Activated naive CD4-positive, alpha-beta T cell treated with anti-CD3 and anti-CD28 coated beads for 36 hours (primary cell): ENCODE measurements at regions of chr9 and their contacts with region 1.

Region 1: DNA sequence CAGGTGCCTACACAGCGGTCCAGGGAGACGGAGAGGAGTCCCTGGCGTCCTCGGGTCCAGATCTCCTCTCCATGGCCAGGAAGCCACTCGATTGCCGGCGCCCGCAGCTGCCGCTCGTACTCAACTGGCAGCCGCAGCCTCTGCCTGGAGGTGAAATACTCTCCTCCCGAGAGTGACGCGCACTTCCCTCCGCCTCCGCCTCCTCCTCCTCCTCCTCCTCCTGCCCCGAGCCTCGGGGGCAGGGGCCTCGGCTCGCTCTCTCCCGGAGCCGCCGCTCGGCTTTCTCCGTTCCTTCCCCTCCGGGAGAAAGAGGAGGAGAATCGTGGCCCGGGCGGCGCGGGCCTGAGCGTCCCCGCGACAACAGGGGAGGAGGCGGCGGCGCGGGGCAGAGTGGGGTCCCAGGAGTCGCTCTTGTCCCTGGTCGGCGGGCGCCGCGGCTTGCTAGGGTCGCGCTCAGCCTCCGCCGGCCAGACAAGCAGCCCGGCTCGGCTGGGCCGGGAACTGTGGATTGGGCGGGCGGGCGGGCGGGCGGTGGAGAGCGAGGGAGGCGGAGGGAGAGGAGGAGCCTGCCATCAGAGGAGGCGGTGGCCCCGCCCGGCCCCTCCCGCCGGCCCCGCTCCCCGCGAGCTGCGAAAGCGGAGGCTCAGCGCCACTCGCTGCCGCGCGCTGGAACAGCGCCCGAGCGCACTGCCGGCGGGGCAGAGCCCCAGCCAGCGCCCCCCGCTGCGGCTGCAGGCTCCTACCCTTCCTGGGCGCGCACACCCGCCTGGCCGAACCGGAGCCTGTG is at the start of gene CEMIP2:
- DNase-seq: peak; percentile 88
- H3K4me3 Mint-ChIP-seq: peak within 1 kb of the TSS; percentile 86
- H3K27ac Mint-ChIP-seq: peak within 1 kb of the TSS; percentile 91
- H3K4me1 Mint-ChIP-seq: peaks cover 37% of the 10 kb centered on the region
- H3K27me3 Mint-ChIP-seq: no peaks in the 10 kb centered on the region
- total RNA-seq, gene CEMIP2: 36.4 to 39.7 TPM

Region 2: GRCh38 chr9:70639853-70640814 is 1128.4 kb before region 1 on chr9:
- CTCF ChIA-PET with region 1: no interaction called
- intact Hi-C with region 1: loop called (anchors 1 kb)
- DNase-seq: peak; percentile 9
- H3K4me3 Mint-ChIP-seq: no peak overlapping the region
- H3K27ac Mint-ChIP-seq: no peak overlapping the region
- H3K4me1 Mint-ChIP-seq: no peaks in the 10 kb centered on the region
- H3K27me3 Mint-ChIP-seq: peaks cover 10% of the 10 kb centered on the region

Region 3: GRCh38 chr9:71446473-71447411 is 321.8 kb before region 1 on chr9:
- CTCF ChIA-PET with region 1: no interaction called
- intact Hi-C with region 1: loop called (anchors 1 kb)
- DNase-seq: peak; percentile 78
- H3K4me3 Mint-ChIP-seq: peak overlapping the region; percentile 55
- H3K27ac Mint-ChIP-seq: no peak overlapping the region
- H3K4me1 Mint-ChIP-seq: peaks cover 3% of the 10 kb centered on the region
- H3K27me3 Mint-ChIP-seq: peaks cover 37% of the 10 kb centered on the region

Region 4: GRCh38 chr9:71683598-71684235 is 84.9 kb before region 1 on chr9:
- CTCF ChIA-PET with region 1: no interaction called
- intact Hi-C with region 1: loop called (anchors 2 kb)
- DNase-seq: no peak
- H3K4me3 Mint-ChIP-seq: no peak overlapping the region
- H3K27ac Mint-ChIP-seq: no peak overlapping the region
- H3K4me1 Mint-ChIP-seq: peaks cover 27% of the 10 kb centered on the region
- H3K27me3 Mint-ChIP-seq: no peaks in the 10 kb centered on the region

Region 5: DNA sequence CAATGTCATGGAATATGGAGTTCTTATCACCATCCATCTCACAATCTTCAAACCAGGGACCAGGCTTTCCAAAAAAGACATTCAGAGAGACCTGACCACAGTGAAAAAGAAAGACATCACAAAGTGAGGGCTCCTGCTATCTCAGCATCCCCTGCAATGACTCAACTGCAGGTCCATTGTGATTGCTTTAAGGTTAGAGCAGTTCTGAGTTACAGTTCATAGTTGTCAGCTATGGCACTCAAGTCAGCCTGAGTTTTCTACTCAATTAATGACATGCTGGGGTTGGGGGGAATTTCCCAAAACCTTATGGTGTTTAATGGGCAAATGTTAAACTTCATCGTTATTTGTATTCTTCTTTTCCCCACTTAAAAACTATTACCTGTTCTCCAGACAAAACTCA is 59.2 kb before region 1 on chr9:
- CTCF ChIA-PET with region 1: no interaction called
- intact Hi-C with region 1: no loop called
- DNase-seq: peak; percentile 11
- H3K4me3 Mint-ChIP-seq: no peak overlapping the region
- H3K27ac Mint-ChIP-seq: peak overlapping the region; percentile 11
- H3K4me1 Mint-ChIP-seq: peaks cover 25% of the 10 kb centered on the region
- H3K27me3 Mint-ChIP-seq: no peaks in the 10 kb centered on the region

Region 6: DNA sequence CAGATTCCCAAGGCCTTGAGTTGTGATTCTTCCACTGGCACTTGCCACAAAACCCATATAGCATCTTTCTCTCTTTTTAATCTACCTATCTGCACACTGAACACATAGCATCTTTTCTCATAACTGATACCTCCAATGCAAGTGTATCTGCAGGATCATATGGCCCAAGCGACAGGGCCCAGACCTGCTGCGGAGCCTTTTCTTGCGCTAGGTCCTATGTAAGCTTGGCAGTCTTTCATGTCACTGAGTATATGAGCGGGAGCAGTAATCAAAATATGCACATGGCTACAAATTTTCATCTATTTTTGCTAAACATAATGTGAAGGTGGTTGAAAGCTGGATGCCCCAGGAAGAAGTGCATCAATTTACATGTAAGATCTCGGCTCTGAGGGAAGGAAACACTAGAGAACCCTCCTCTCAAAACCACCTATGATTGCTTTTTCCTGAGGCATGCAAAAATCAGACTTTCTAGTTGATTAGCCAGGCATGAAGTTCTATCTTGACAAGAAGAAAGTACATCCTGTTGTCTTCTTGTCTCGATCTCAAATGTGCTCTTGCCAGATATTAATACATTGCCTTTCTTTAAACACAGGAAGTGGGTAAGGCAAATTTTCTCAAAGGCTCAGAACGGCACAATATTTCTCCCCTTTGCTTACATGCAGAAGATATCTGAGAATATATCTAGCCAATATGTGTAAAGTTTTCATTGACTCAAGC is 26.7 kb after region 1 on chr9:
- CTCF ChIA-PET with region 1: interaction called, 7 read pairs
- intact Hi-C with region 1: loop called (anchors 1 kb)
- DNase-seq: no peak
- H3K4me3 Mint-ChIP-seq: no peak overlapping the region
- H3K27ac Mint-ChIP-seq: peak overlapping the region; percentile 72
- H3K4me1 Mint-ChIP-seq: peaks cover 61% of the 10 kb centered on the region
- H3K27me3 Mint-ChIP-seq: no peaks in the 10 kb centered on the region

Region 7: DNA sequence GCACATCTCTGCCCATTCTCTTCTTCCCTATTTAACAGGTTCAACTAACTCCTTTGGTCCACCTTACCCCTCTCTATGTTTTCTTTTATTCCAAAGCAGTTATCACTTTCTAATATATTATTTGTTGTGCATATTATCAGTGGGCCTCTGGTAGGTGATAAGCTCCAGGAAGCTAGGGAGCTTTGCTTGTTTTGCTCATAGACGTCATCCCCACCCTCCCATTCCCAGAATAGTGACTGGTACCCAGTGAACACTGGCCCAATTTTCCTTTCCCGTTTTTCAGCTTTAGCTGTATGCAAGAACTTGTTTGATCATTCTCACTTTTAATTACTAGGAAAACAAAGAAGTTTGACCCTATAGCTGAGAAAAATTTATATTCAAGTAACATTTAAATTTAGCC is 135.5 kb after region 1 on chr9:
- CTCF ChIA-PET with region 1: no interaction called
- intact Hi-C with region 1: no loop called
- DNase-seq: no peak
- H3K4me3 Mint-ChIP-seq: no peak overlapping the region
- H3K27ac Mint-ChIP-seq: no peak overlapping the region
- H3K4me1 Mint-ChIP-seq: peaks cover 50% of the 10 kb centered on the region
- H3K27me3 Mint-ChIP-seq: no peaks in the 10 kb centered on the region

Region 8: DNA sequence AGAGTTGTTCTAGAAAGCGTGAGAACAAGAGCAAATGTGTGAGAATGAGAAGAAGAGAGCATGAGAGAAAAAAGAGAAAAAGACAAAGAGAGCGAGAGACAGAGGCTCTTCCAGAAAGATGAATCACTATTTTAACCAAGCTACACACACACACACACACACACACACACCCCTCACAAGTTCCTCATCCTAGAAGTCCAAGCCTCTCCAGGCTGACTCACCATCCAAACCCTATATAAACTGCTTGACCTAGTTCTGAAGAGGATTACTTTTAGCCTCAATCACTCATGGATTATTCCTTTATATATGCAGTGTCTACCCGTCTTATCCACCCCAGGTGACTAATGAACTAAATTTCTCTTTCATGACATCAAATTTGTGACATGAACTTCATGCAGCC is 254.3 kb after region 1 on chr9:
- CTCF ChIA-PET with region 1: no interaction called
- intact Hi-C with region 1: loop called (anchors 1 kb)
- DNase-seq: no peak
- H3K4me3 Mint-ChIP-seq: no peak overlapping the region
- H3K27ac Mint-ChIP-seq: no peak overlapping the region
- H3K4me1 Mint-ChIP-seq: no peaks in the 10 kb centered on the region
- H3K27me3 Mint-ChIP-seq: no peaks in the 10 kb centered on the region